ENCODE measurements at regions of chr16 and their contacts with region 1.

Region 1: GRCh38 chr16:22321339-22322001 is 24.3 kb downstream of the POLR3E start:
- DNase-seq: no peak

Region 2: DNA sequence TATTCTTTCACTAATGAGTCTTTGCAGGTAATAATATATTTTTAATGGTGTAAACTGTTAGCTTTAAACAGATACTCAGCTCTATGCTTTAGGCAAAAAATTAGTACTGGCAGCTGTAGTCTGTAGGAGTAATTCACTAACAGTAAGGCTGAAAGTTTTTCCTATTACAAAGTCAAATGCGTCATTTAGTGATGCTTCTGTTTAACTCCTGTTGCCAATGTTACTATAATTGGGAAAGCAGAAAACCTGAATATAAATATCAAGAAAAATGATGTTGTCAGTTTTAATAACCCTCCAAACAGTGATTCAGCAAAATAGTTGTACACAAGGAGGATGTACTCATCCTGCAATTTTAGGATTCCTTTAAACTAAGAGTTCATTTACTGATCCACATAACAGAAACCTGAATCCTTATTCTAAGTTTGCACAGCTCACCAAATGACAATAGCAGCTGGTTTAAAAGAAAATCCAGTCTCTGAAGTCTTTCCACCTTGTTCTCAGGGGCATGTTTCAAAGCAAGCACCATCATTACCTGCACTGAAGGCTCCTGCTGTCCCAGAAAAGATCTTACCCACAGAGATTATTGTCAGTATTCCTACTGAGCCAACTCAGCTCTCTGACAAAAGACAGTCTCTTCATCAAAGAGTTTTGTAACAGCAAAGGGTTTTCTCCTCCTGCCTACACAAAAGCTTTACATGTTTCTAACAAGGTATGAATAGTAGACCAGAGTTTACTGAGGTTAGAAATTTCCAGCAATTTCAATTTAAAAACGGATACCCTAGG is 48.8 kb after region 1 on chr16:
- intact Hi-C with region 1: loop called in 1 of 2 experiments (anchors 1 kb)
- DNase-seq: no peak

Region 3: DNA sequence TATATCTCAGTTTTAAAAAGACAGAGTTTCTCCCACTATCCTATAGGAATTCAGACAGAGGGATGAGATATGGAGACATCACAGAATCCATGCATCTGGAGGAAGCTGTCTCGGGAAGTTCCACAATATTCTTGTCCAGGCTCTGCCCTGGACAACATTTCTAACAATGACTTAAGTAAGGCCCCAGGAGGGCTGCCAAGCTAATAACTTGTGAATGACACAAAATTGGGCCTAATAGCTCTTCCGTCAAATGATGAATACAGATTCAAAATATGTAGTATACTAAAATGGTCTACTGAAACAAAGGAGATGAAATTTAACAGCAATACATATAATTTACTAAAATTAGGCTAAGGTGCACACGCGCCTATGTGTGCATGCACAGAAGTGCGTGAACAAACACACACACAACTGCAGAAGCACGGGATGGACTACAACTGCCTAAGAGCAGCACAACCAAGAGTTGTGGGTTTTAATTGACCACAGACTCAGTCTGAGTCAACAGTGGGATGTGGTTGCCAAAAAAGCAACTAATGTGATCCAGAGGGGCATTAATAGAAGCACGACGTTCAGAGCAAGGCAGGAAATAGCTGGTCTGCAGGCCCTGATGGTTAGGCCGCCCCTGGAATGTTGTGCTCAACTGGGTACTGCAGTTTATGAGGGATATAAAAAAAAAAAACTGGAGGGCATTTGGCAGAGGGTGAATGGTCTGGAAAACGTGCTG is 466.2 kb after region 1 on chr16:
- intact Hi-C with region 1: no loop called
- DNase-seq: no peak